Activated CD4-positive, alpha-beta T cell treated with anti-CD3 and anti-CD28 coated beads for 36 hours (primary cell): ENCODE measurements at regions of chr9 and their contacts with region 1.

Region 1: GRCh38 chr9:115373000-115373709 is 255.2 kb upstream of the TNC start:
- DNase-seq: peak; percentile 54
- ATAC-seq: peak; percentile 92
- H3K4me3 Mint-ChIP-seq: no peak overlapping the region
- H3K27ac Mint-ChIP-seq: no peak overlapping the region
- H3K4me1 Mint-ChIP-seq: peaks cover 2% of the 10 kb centered on the region
- H3K27me3 Mint-ChIP-seq: peaks cover 7% of the 10 kb centered on the region

Region 2: DNA sequence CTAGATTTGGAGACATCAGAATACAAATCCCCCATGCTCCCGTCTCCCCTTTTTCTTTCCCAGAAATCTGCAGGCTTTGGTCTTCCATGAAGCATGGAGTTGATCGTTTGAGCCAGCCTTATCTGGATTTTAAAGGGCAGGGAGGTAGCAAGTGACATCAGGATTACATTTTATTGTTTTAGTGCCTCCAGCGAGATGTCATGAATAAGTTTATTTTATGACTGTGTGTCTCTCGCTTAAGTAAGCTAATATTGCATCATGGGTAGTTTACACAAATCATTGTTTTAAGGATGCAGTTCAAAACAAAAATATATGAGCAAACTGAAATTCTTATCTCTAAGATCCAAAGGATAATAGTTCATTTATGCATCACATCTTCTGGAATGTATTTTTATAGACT is 392.1 kb before region 1 on chr9:
- CTCF ChIA-PET with region 1: no interaction called
- POLR2A ChIA-PET with region 1: no interaction called
- intact Hi-C with region 1: no loop called
- DNase-seq: no peak
- ATAC-seq: no peak
- H3K4me3 Mint-ChIP-seq: no peak overlapping the region
- H3K27ac Mint-ChIP-seq: no peak overlapping the region
- H3K4me1 Mint-ChIP-seq: no peaks in the 10 kb centered on the region
- H3K27me3 Mint-ChIP-seq: no peaks in the 10 kb centered on the region

Region 3: GRCh38 chr9:115204904-115205453 is 168.2 kb before region 1 on chr9:
- CTCF ChIA-PET with region 1: no interaction called
- POLR2A ChIA-PET with region 1: no interaction called
- intact Hi-C with region 1: loop called in 1 of 2 experiments (anchors 5 kb)
- DNase-seq: no peak
- ATAC-seq: peak; percentile 78
- H3K4me3 Mint-ChIP-seq: no peak overlapping the region
- H3K27ac Mint-ChIP-seq: peak overlapping the region; percentile 20
- H3K4me1 Mint-ChIP-seq: peaks cover 38% of the 10 kb centered on the region
- H3K27me3 Mint-ChIP-seq: peaks cover 32% of the 10 kb centered on the region